Activated CD4-positive, alpha-beta T cell treated with anti-CD3 and anti-CD28 coated beads for 36 hours (primary cell): ENCODE measurements at regions of chr9 and their contacts with region 1.

Region 1: GRCh38 chr9:137578518-137579258 is at the start of gene DPH7:
- DNase-seq: peak; percentile 98
- ATAC-seq: peak; percentile 99
- H3K4me3 Mint-ChIP-seq: peak within 1 kb of the TSS; percentile 80
- H3K27ac Mint-ChIP-seq: peak within 1 kb of the TSS; percentile 55
- H3K4me1 Mint-ChIP-seq: peaks cover 28% of the 10 kb centered on the region
- H3K27me3 Mint-ChIP-seq: no peaks in the 10 kb centered on the region
- total RNA-seq, gene DPH7: 23.5 to 29.1 TPM

Region 2: DNA sequence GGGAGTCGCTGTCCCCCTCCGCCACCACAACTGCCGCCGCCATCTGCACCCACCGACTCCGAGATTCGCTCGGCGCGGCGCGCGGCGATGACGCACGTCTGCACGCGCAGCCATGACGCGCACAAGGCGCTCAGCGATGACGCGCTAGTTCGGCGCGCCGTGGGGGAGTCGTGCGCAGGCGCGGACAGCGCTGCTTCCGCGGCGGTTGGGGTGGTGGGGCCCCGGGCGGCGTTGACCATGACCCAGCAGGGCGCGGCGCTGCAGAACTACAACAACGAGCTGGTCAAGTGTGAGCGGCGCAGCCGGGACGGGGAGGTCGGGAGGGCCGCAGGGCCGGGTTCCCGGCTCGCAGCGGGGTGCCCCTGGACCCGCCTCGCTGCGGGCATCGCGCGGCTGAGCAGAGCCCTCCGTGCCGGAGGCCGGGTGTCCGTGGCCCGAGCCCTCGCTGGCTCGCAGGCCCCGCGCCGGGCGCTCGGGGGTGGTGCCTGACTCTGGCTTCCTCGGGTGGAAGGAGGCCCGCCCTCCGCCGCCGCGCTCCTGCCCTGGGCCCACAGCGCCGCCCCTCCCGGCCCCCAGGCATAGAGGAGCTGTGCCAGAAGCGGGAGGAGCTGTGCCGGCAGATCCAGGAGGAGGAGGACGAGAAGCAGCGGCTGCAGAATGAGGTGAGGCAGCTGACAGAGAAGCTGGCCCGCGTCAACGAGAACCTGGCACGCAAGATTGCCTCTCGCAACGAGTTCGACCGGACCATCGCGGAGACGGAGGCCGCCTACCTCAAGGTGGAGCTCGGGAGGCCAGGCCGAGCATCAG is 390.0 kb before region 1 on chr9 and contains the starts of genes ANAPC2 and SSNA1:
- CTCF ChIA-PET with region 1: no interaction called
- POLR2A ChIA-PET with region 1: no interaction called
- intact Hi-C with region 1: no loop called
- DNase-seq: peak; percentile 96
- ATAC-seq: peak; percentile 85
- H3K4me3 Mint-ChIP-seq: peak within 1 kb of the TSS; percentile 91
- H3K27ac Mint-ChIP-seq: peak within 1 kb of the TSS; percentile 88
- H3K4me1 Mint-ChIP-seq: peaks cover 33% of the 10 kb centered on the region
- H3K27me3 Mint-ChIP-seq: no peaks in the 10 kb centered on the region
- total RNA-seq, gene ANAPC2: 30.8 to 38.4 TPM
- total RNA-seq, gene SSNA1: 53.6 to 58.6 TPM

Region 3: DNA sequence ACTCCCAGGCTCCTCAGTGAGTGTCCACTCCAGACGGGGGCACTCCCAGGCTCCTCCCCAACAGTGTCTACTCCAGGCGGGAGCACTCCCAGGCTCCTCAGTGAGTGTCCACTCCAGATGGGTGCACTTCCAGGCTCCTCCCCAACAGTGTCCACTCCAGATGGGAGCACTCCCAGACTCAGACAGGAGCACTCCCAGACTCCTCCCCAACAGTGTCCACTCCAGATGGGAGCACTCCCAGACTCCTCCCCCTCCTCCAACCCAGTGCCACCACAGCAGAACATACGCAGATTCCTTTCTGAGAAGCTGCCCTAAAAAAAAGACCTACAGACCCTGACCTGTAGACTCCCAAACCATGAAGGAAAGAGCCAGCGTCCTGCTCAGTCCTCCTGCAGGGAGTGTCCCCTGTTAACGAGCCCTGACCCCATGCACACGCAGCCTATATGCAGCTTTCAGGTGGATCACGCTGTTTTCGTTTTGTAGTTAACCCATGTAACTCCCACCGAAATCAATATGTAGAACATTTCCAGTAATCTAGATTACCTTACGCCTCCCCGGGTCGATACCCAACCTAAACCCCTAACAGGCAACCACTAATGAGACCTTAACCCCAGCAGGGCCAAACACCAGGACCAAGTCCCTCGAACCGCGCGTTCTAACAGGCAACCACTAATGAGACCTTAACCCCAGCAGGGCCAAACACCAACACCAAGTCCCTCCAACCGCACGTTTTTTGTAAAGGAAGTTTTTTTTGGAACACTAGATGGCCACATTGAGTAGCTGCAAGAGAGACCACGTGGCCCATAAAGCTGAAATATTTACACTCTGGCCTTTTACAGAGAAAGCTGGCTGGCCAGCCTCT is 44.2 kb before region 1 on chr9:
- CTCF ChIA-PET with region 1: no interaction called
- POLR2A ChIA-PET with region 1: no interaction called
- intact Hi-C with region 1: loop called in 1 of 2 experiments (anchors 2 kb)
- DNase-seq: peak; percentile 32
- ATAC-seq: peak; percentile 86
- H3K4me3 Mint-ChIP-seq: no peak overlapping the region
- H3K27ac Mint-ChIP-seq: peak overlapping the region; percentile 73
- H3K4me1 Mint-ChIP-seq: peaks cover 27% of the 10 kb centered on the region
- H3K27me3 Mint-ChIP-seq: no peaks in the 10 kb centered on the region

Region 4: GRCh38 chr9:137590462-137591383 is 12.0 kb after region 1 on chr9 and contains the start of gene ZMYND19:
- CTCF ChIA-PET with region 1: interaction called, 12 read pairs
- POLR2A ChIA-PET with region 1: interaction called, 4 read pairs
- intact Hi-C with region 1: loop called in 1 of 2 experiments (anchors 1 kb)
- DNase-seq: peak; percentile 94
- ATAC-seq: peak; percentile 97
- H3K4me3 Mint-ChIP-seq: peak within 1 kb of the TSS; percentile 87
- H3K27ac Mint-ChIP-seq: peak within 1 kb of the TSS; percentile 95
- H3K4me1 Mint-ChIP-seq: peaks cover 17% of the 10 kb centered on the region
- H3K27me3 Mint-ChIP-seq: no peaks in the 10 kb centered on the region
- total RNA-seq, gene ZMYND19: 36.2 to 43.0 TPM

Region 5: DNA sequence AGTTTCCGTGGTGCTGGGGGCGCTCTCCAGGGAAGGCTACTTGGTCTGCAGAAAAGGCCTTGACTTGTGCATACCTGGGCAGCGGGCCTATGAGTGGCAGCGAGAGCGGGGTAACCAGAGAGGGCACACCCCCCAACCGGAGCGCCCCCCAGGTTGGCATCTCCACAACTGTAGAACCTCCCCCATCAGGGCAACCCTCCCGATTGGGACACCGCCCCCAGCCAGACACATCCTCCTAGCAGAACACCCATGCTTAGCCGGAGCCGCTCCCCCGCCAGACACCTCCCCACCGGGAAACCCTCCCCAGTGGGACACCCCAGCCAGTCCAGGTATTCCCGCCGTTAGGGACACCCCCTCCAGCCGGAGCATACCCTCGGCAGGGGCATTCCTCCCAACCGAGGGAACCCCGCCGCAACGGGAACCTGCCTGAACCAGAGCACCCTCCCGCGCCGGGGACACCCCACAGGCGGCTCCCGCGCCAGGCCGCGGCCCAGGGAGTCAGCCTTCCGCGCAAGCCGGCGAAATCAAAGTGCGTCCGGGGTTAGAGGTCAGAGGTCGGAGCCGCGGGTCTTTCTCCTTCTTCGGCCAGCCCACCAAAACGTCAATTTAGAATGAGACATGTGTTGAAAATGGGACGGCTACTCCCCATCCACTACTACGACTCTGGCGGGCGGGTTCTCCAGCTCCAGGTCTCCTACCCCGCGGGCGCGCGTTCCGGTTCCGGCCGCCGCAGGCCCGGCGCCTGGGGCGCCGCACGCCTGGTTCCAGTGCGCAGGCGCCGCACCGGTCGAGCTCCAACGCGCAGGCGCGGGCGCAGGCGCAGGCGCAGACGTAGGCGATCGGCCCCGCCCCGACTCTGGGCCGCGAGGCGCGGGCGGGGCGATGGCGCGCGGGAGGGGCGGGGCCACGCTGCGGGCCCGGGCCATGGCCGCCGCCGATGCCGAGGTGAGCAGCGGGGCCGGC is 39.7 kb after region 1 on chr9 and contains the start of gene EHMT1:
- CTCF ChIA-PET with region 1: no interaction called
- POLR2A ChIA-PET with region 1: no interaction called
- intact Hi-C with region 1: loop called in 1 of 2 experiments (anchors 1 kb)
- DNase-seq: peak; percentile 92
- ATAC-seq: peak; percentile 82
- H3K4me3 Mint-ChIP-seq: peak within 1 kb of the TSS; percentile 85
- H3K27ac Mint-ChIP-seq: peak within 1 kb of the TSS; percentile 90
- H3K4me1 Mint-ChIP-seq: peaks cover 37% of the 10 kb centered on the region
- H3K27me3 Mint-ChIP-seq: no peaks in the 10 kb centered on the region
- total RNA-seq, gene EHMT1: 66.6 to 76.7 TPM